ENCODE measurements at regions of chr9 and their contacts with region 1.

Region 1: GRCh38 chr9:116646661-116647512 is 40.2 kb upstream of the TRIM32 start:
- DNase-seq: no peak
- H3K4me3 ChIP-seq: no peak overlapping the region
- CTCF ChIP-seq: peak; percentile 62

Region 2: DNA sequence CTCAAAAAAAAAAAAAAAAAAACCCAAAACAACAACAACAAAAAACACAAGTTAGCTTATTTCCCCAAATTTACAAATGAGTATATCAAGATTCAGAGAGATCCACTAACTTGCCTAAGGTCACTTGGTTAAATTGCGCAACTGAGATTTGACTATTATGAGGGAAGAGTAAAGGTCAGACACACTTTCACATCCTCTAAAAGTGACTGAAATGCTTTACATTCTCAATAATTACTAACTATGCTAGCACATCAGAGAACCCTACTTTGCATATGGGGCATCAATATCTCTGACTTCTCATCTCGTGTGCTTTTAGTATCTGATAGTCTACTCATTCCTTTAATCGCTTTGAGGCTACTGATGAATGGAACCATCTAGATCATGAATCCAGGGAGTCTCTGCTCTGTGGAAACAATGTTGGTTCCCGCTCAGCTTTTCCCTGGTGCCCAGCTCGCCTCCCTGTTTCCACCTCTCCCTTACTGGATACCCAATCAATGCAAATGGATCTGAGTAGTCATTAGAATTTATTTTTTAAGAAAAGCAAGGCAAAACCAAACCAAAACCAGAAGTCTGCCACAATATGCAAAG is 141.9 kb before region 1 on chr9:
- CTCF ChIA-PET with region 1: no interaction called
- POLR2A ChIA-PET with region 1: no interaction called
- DNase-seq: no peak
- H3K4me3 ChIP-seq: no peak overlapping the region
- CTCF ChIP-seq: no peak

Region 3: GRCh38 chr9:116589392-116590354 is 57.2 kb before region 1 on chr9:
- CTCF ChIA-PET with region 1: interaction called, 12 read pairs
- POLR2A ChIA-PET with region 1: no interaction called
- DNase-seq: no peak
- H3K4me3 ChIP-seq: no peak overlapping the region
- CTCF ChIP-seq: peak; percentile 23

Region 4: GRCh38 chr9:116632990-116633838 is 13.7 kb before region 1 on chr9:
- CTCF ChIA-PET with region 1: interaction called, 10 read pairs
- POLR2A ChIA-PET with region 1: no interaction called
- DNase-seq: no peak
- H3K4me3 ChIP-seq: no peak overlapping the region
- CTCF ChIP-seq: no peak

Region 5: DNA sequence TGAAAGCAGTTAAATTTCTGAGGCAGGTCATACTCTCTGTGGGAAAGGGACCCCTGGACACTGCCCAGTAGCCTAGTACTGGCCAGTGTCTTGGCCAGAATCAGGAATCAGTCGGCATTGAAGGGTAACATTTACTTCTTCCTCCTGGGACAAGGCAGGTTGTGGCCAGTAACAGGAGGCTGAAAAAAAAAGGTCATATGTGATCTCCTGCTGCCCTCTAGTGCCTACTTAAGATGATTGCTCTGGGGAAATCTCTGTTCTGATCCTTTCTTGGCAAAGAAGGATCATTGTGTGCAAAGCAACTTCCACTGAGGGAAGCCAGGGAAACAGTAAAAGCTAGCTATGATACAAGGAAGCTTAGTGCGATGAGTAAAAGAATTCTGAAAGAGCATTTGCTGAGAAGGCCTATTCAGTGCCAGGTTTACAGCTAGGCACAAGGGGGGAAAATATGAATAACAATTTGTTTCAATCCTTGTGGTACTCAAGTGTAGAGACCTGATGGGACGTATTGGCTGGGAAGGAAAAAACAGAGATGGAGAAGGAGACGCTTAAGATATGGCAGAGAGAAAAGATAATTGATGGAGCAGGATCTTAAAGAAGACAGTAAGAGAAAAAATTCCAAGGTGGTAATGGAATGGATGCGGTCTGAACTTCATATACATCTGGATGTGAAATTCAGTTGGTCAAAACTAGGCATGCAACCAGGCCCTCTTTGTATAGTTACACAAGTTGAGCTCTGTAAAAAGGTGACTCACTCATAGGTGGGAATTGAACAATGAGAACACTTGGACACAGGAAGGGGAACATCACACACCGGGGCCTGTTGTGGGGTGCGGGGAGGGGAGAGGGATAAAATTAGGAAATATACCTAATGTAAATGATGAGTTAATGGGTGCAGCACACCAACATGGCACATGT is 14.4 kb after region 1 on chr9:
- CTCF ChIA-PET with region 1: interaction called, 54 read pairs
- POLR2A ChIA-PET with region 1: no interaction called
- DNase-seq: peak; percentile 61
- H3K4me3 ChIP-seq: no peak overlapping the region
- CTCF ChIP-seq: peak; percentile 74